CD14-positive monocyte (primary cell): ENCODE measurements at regions of chr22 and their contacts with region 1.

Region 1: DNA sequence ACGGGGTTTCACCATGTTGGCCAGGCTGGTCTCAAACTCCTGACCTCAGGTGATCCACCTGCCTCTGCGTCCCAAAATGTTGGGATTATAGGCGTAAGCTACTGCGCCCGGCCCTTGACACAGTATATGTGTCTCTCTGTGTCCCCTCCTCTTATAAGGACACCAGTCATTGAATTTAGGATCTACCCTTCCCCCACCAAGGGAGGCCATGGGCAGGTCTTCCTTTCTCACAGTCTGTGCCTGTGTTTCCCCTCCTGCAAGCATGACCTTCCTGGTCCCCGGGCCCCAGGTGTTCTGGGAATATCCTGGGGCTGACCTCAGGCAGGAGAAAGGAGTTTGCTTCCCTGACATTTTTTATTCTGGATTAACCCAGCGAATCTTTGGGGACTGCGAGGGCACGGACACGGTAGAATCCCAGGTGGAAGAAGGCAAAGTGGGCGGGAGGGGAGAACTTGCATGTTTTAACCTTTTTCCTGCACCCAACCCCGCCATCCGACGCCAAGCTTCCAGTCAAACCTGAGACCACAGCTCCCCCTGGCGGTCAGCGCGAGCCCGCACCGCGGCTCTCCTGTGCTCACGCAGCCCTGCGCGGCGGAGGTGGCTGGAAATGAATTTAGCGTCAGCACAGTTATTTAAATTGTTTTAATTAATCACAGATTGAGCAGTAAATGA is 42.1 kb upstream of the ISX start:
- DNase-seq: peak in 2 of 3 donors; percentile 12 to 25
- H3K4me3 ChIP-seq: no peak overlapping the region
- H3K4me3 Mint-ChIP-seq: peak overlapping the region in 1 of 2 donors; percentile 43
- H3K27ac ChIP-seq: no peak overlapping the region
- H3K27ac Mint-ChIP-seq: peak overlapping the region in 1 of 7 donors; percentile 35
- H3K4me1 ChIP-seq: no peaks in the 10 kb centered on the region
- H3K4me1 Mint-ChIP-seq: peaks cover 3% of the 10 kb centered on the region
- H3K27me3 ChIP-seq: no peaks in the 10 kb centered on the region
- H3K27me3 Mint-ChIP-seq: peaks cover 4 to 26% (median 4%) of the 10 kb centered on the region in 3 donors
- CTCF ChIP-seq: peak; percentile 92

Region 2: DNA sequence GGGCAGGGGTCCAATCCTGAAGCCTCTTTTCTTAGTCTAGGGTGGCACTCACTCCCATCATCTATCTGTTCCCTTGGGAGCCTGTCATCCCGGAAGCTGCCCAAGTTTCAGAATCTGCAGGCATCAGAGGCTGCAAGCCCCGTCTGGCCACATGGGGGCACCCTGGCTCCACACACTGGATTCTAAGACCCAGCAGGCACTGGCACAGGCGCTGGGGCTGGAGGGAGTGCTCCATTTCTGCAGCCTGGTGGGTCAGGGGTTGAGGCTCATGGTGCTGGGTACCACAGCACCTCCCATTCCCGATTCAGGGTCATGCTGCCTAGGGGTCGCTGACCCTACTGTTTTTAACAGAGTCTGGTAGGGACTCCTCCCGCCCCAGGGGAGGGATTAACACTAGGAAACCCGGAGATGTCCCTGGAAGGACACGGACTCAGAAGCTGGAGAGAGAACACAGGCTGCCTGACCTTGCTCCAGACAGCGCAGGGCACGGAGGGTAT is 1721.7 kb before region 1 on chr22:
- intact Hi-C with region 1: loop called in 1 of 2 experiments (anchors 5 kb)
- DNase-seq: peak in 1 of 3 donors; percentile 14
- H3K4me3 ChIP-seq: no peak overlapping the region
- H3K4me3 Mint-ChIP-seq: no peak overlapping the region
- H3K27ac ChIP-seq: no peak overlapping the region
- H3K27ac Mint-ChIP-seq: no peak overlapping the region
- H3K4me1 ChIP-seq: peaks cover 4 to 6% of the 10 kb centered on the region in 2 donors
- H3K4me1 Mint-ChIP-seq: peaks cover 9% of the 10 kb centered on the region
- H3K27me3 ChIP-seq: no peaks in the 10 kb centered on the region
- H3K27me3 Mint-ChIP-seq: peaks cover 1 to 3% (median 2%) of the 10 kb centered on the region in 3 donors
- CTCF ChIP-seq: peak; percentile 65

Region 3: GRCh38 chr22:35191412-35191811 is 167.6 kb after region 1 on chr22:
- intact Hi-C with region 1: no loop called
- DNase-seq: no peak
- H3K4me3 ChIP-seq: no peak overlapping the region
- H3K4me3 Mint-ChIP-seq: no peak overlapping the region
- H3K27ac ChIP-seq: no peak overlapping the region
- H3K27ac Mint-ChIP-seq: no peak overlapping the region
- H3K4me1 ChIP-seq: no peaks in the 10 kb centered on the region
- H3K4me1 Mint-ChIP-seq: no peaks in the 10 kb centered on the region
- H3K27me3 ChIP-seq: no peaks in the 10 kb centered on the region
- H3K27me3 Mint-ChIP-seq: peaks cover 0 to 5% (median 2%) of the 10 kb centered on the region in 3 donors
- CTCF ChIP-seq: no peak